ENCODE measurements at regions of chr4 and their contacts with region 1.

Region 1: GRCh38 chr4:168831919-168832762 is 177.9 kb downstream of the CBR4 start:
- DNase-seq: peak; percentile 78 to 90 (median 87)
- ATAC-seq: peak; percentile 56 to 89 (median 86)
- H3K4me3 ChIP-seq: peak overlapping the region; percentile 61 to 95 (median 74)
- H3K27ac ChIP-seq: peak overlapping the region; percentile 80 to 97 (median 87)
- H3K4me1 ChIP-seq: peaks cover 0 to 54% (median 38%) of the 10 kb centered on the region in 12 donors
- H3K27me3 ChIP-seq: peaks cover 0 to 16% (median 0%) of the 10 kb centered on the region in 9 donors
- CTCF ChIP-seq: peak in 1 of 12 donors; percentile 13
- POLR2A ChIP-seq: peak; percentile 50 to 97

Region 2: GRCh38 chr4:168773388-168774195 is 58.5 kb before region 1 on chr4:
- intact Hi-C with region 1: loop called in 1 of 10 experiments (anchors 10 kb)
- DNase-seq: peak in 2 of 5 donors; percentile 41 to 63
- ATAC-seq: peak; percentile 32 to 73 (median 59)
- H3K4me3 ChIP-seq: peak overlapping the region in 1 of 12 donors; percentile 18
- H3K27ac ChIP-seq: peak overlapping the region in 8 of 12 donors; percentile 9 to 70 (median 42)
- H3K4me1 ChIP-seq: peaks cover 0 to 51% (median 27%) of the 10 kb centered on the region in 12 donors
- H3K27me3 ChIP-seq: no peaks in the 10 kb centered on the region
- CTCF ChIP-seq: no peak
- POLR2A ChIP-seq: no peak

Region 3: GRCh38 chr4:168815379-168816345 is 16.5 kb before region 1 on chr4:
- intact Hi-C with region 1: loop called in 2 of 10 experiments (anchors 2 kb)
- DNase-seq: no peak
- ATAC-seq: peak in 1 of 4 donors; percentile 34
- H3K4me3 ChIP-seq: no peak overlapping the region
- H3K27ac ChIP-seq: peak overlapping the region; percentile 22 to 89 (median 82)
- H3K4me1 ChIP-seq: peaks cover 0 to 53% (median 27%) of the 10 kb centered on the region in 12 donors
- H3K27me3 ChIP-seq: no peaks in the 10 kb centered on the region
- CTCF ChIP-seq: no peak
- POLR2A ChIP-seq: no peak

Region 4: GRCh38 chr4:168864821-168865541 is 32.8 kb after region 1 on chr4:
- intact Hi-C with region 1: loop called in 1 of 10 experiments (anchors 5 kb)
- DNase-seq: no peak
- ATAC-seq: no peak
- H3K4me3 ChIP-seq: no peak overlapping the region
- H3K27ac ChIP-seq: peak overlapping the region in 5 of 12 donors; percentile 1 to 63 (median 28)
- H3K4me1 ChIP-seq: peaks cover 0 to 84% (median 37%) of the 10 kb centered on the region in 12 donors
- H3K27me3 ChIP-seq: no peaks in the 10 kb centered on the region
- CTCF ChIP-seq: peak in 6 of 12 donors; percentile 12 to 48 (median 31)
- POLR2A ChIP-seq: no peak

Region 5: GRCh38 chr4:168917138-168917779 is 85.1 kb after region 1 on chr4:
- intact Hi-C with region 1: loop called in 3 of 10 experiments (anchors 5 kb)
- DNase-seq: no peak
- ATAC-seq: no peak
- H3K4me3 ChIP-seq: no peak overlapping the region
- H3K27ac ChIP-seq: peak overlapping the region in 2 of 12 donors; percentile 8 to 49
- H3K4me1 ChIP-seq: peaks cover 0 to 20% (median 2%) of the 10 kb centered on the region in 12 donors
- H3K27me3 ChIP-seq: no peaks in the 10 kb centered on the region
- CTCF ChIP-seq: peak; percentile 36 to 73 (median 60)
- POLR2A ChIP-seq: no peak